Activated CD8-positive, alpha-beta T cell treated with anti-CD3 and anti-CD28 coated beads, Interleukin-2, amount 10 ng/mL, durations not matched to agents 7 days and 5 days (primary cell): ENCODE measurements at regions of chr4 and their contacts with region 1.

Region 1: GRCh38 chr4:82462415-82462831 is 32.0 kb downstream of the ENOPH1 start:
- DNase-seq: peak; percentile 89
- ATAC-seq: peak; percentile 94
- H3K4me3 Mint-ChIP-seq: no peak overlapping the region
- H3K27ac Mint-ChIP-seq: no peak overlapping the region
- H3K4me1 Mint-ChIP-seq: no peaks in the 10 kb centered on the region
- H3K27me3 Mint-ChIP-seq: no peaks in the 10 kb centered on the region

Region 2: DNA sequence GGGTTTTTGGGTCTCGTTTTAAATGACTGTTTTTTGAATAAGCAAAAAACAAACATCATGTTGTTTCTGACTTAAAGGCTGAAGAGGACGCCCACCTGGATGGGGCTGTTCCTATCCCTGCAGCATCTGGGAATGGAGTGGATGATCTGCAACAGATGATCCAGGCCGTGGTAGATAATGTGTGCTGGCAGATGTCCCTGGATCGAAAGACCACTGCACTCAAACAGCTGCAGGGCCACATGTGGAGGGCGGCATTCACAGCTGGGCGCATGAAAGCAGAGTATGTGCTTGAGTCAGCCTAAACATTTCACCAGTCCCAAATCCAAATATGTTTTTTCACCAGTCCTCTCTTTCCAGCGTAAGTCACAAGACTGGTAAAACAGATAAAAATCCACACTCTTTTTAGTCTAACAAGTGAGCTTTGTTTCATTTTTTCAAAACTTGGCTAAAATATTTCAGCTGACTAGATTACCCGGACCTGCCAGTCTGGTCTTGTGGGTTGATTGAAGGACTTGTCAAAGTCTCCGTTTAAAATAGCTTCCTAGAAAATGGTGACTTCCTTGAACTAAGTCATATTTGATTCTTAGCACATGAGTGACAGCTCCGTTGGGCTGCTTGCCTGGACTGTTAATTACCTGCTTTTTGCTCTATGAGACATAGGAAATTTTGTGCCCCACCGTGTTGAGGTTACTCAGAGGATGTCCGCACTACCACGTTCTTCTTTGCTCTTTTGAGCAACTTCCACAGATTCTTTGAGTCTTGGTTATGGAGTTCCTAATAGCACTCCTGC is 11.3 kb before region 1 on chr4:
- CTCF ChIA-PET with region 1: interaction called, 11 read pairs
- POLR2A ChIA-PET with region 1: no interaction called
- DNase-seq: no peak
- ATAC-seq: no peak
- H3K4me3 Mint-ChIP-seq: no peak overlapping the region
- H3K27ac Mint-ChIP-seq: no peak overlapping the region
- H3K4me1 Mint-ChIP-seq: peaks cover 5% of the 10 kb centered on the region
- H3K27me3 Mint-ChIP-seq: no peaks in the 10 kb centered on the region

Region 3: GRCh38 chr4:82739316-82740179 is 277.1 kb after region 1 on chr4:
- CTCF ChIA-PET with region 1: interaction called, 14 read pairs
- POLR2A ChIA-PET with region 1: interaction called, 3 read pairs
- DNase-seq: peak; percentile 82
- ATAC-seq: peak; percentile 100
- H3K4me3 Mint-ChIP-seq: no peak overlapping the region
- H3K27ac Mint-ChIP-seq: no peak overlapping the region
- H3K4me1 Mint-ChIP-seq: no peaks in the 10 kb centered on the region
- H3K27me3 Mint-ChIP-seq: peaks cover 3% of the 10 kb centered on the region